HepG2 (cell line): ENCODE measurements at regions of chr1 and their contacts with region 1.

Region 1: GRCh38 chr1:13960375-13960987 is 260.5 kb downstream of the PRDM2 start:
- DNase-seq: peak; percentile 43
- ATAC-seq: peak; percentile 72
- H3K4me3 ChIP-seq: no peak overlapping the region
- H3K27ac ChIP-seq: no peak overlapping the region
- H3K4me1 ChIP-seq: no peaks in the 10 kb centered on the region
- H3K27me3 ChIP-seq: no peaks in the 10 kb centered on the region; a peak in 1 of 5 replicates
- CTCF ChIP-seq: peak; percentile 94
- EP300 ChIP-seq: no peak
- POLR2A ChIP-seq: no peak
- RAD21 ChIP-seq: peak; percentile 64

Region 2: GRCh38 chr1:13662493-13662892 is 298.0 kb before region 1 on chr1:
- CTCF ChIA-PET with region 1: interaction called, 16 read pairs
- POLR2A ChIA-PET with region 1: no interaction called
- in situ Hi-C with region 1: loop called (anchors 10 kb)
- intact Hi-C with region 1: loop called (anchors 1 kb)
- DNase-seq: no peak
- ATAC-seq: no peak
- H3K4me3 ChIP-seq: no peak overlapping the region
- H3K27ac ChIP-seq: no peak overlapping the region
- H3K4me1 ChIP-seq: no peaks in the 10 kb centered on the region
- H3K27me3 ChIP-seq: peaks cover 3 to 17% of the 10 kb centered on the region in 2 experiments; a peak in 3 of 5 replicates
- CTCF ChIP-seq: no peak
- EP300 ChIP-seq: no peak
- POLR2A ChIP-seq: no peak
- RAD21 ChIP-seq: no peak

Region 3: GRCh38 chr1:13667691-13668090 is 292.8 kb before region 1 on chr1:
- CTCF ChIA-PET with region 1: interaction called, 16 read pairs
- POLR2A ChIA-PET with region 1: no interaction called
- in situ Hi-C with region 1: loop called (anchors 10 kb)
- intact Hi-C with region 1: loop called (anchors 1 kb)
- DNase-seq: no peak
- ATAC-seq: no peak
- H3K4me3 ChIP-seq: no peak overlapping the region
- H3K27ac ChIP-seq: no peak overlapping the region
- H3K4me1 ChIP-seq: no peaks in the 10 kb centered on the region
- H3K27me3 ChIP-seq: peaks cover 3 to 12% of the 10 kb centered on the region in 2 experiments; a peak in 2 of 5 replicates
- CTCF ChIP-seq: no peak
- EP300 ChIP-seq: no peak
- POLR2A ChIP-seq: no peak
- RAD21 ChIP-seq: no peak

Region 4: DNA sequence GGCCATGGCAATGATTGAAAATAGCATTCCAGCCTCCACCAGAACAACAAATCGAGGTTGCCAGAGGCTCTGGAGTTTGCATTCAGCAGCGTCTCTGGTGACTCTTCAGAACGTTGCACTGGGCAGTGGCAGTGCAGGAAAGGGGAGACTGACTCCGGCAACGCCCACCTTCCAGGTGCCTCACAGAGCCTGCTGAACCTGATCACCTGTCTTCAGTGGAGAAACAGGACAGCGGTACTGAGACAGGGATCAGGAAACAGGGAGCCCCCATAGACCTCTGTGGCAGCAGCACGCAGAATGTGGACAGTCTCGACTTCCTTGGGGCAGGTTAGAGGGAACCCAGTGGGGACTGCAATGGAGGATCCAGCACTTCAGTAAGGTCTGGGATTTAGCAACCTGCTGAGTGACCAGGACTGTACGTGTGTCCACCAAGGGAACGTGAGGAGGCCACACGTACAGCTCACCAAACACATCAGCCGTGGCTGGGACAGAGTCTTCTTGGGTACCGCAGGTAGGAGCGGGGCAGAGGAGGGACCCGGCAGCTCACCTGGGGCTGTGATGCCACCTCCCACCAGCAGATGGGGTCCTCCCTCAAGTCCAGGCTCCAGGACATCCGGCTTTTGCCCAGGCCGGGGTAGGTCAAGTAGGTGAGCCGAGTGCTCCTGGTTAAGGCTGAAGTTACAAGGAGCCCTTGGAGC is 131.9 kb before region 1 on chr1:
- CTCF ChIA-PET with region 1: interaction called, 6 read pairs
- POLR2A ChIA-PET with region 1: no interaction called
- in situ Hi-C with region 1: loop called (anchors 5 kb)
- intact Hi-C with region 1: loop called (anchors 2 kb)
- DNase-seq: peak; percentile 23
- ATAC-seq: peak; percentile 94
- H3K4me3 ChIP-seq: peak overlapping the region in 1 of 3 experiments; percentile 60; a peak in 1 of 6 replicates
- H3K27ac ChIP-seq: no peak overlapping the region
- H3K4me1 ChIP-seq: peaks cover 8% of the 10 kb centered on the region
- H3K27me3 ChIP-seq: peaks cover 1 to 5% of the 10 kb centered on the region in 2 experiments; a peak in 2 of 5 replicates
- CTCF ChIP-seq: peak; percentile 75
- EP300 ChIP-seq: no peak
- POLR2A ChIP-seq: no peak
- RAD21 ChIP-seq: 0 out of 2 replicates have a peak, but pooled peaks have one; percentile 14

Region 5: DNA sequence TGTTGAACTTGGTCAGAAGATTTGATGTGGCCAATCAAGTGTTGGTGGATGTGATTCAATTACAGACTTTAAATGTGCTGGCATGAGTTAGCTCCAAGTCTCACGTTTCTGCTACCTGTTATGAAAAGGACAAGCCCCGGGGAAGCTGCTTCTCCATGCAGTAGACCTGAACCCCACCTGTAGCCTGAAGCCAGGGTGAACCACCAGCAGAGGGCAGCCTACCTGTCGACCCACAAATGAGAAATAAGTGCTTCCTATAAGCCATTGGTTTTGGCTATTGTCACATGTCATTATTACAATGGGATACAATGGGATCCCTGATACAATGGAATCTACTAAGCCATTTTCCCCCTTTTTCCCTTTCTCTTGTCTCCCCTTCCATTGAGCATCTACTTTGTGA is 30.3 kb before region 1 on chr1:
- CTCF ChIA-PET with region 1: interaction called, 10 read pairs
- POLR2A ChIA-PET with region 1: no interaction called
- in situ Hi-C with region 1: no loop called
- intact Hi-C with region 1: loop called (anchors 1 kb)
- DNase-seq: peak; percentile 9
- ATAC-seq: peak; percentile 54; the same call in 2 of the 3 replicates
- H3K4me3 ChIP-seq: no peak overlapping the region
- H3K27ac ChIP-seq: no peak overlapping the region
- H3K4me1 ChIP-seq: no peaks in the 10 kb centered on the region
- H3K27me3 ChIP-seq: peaks cover 0 to 1% of the 10 kb centered on the region in 2 experiments; a peak in 1 of 5 replicates
- CTCF ChIP-seq: peak; percentile 46
- EP300 ChIP-seq: no peak
- POLR2A ChIP-seq: no peak
- RAD21 ChIP-seq: no peak

Region 6: GRCh38 chr1:14010431-14010830 is 50.0 kb after region 1 on chr1:
- CTCF ChIA-PET with region 1: no interaction called
- POLR2A ChIA-PET with region 1: no interaction called
- in situ Hi-C with region 1: no loop called
- intact Hi-C with region 1: no loop called
- DNase-seq: no peak
- ATAC-seq: no peak
- H3K4me3 ChIP-seq: no peak overlapping the region
- H3K27ac ChIP-seq: no peak overlapping the region
- H3K4me1 ChIP-seq: no peaks in the 10 kb centered on the region
- H3K27me3 ChIP-seq: peaks cover 0 to 6% of the 10 kb centered on the region in 2 experiments; a peak in 2 of 5 replicates
- CTCF ChIP-seq: no peak
- EP300 ChIP-seq: no peak
- POLR2A ChIP-seq: no peak
- RAD21 ChIP-seq: no peak

Region 7: DNA sequence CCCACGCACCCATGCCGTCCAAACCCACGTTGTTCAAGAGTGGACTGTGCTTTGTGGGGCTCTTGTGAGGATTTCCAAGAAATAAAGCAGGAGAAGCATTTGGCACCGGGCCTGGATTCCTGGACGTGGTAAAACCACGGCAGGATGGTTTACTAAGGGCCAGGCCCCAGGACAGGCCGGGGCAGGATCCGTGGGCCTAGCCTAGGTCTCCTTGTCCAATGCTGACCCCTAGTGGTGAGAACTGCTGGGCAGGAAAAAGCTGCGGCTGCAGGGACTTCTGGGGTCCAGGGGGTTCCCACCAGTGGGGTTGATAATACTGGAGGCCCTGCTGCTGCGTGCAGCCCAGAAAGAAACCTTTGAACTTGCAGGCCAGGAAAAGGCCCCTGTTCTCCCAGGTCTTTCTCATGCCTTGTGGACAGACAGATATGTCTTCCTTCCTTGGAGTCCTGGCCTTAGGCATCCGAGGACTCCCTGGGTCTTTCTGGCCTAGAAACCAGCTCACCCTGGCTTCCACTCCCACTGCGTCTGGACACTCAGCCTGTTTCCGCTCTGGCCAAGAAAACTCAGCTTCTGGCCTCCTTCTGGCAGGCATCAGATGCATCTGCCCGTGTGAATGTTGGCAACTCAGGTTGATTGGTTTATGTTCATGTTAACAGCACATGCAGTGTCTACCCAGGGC is 1086.1 kb after region 1 on chr1:
- CTCF ChIA-PET with region 1: no interaction called
- POLR2A ChIA-PET with region 1: no interaction called
- in situ Hi-C with region 1: loop called (anchors 25 kb)
- intact Hi-C with region 1: no loop called
- DNase-seq: peak; percentile 48
- ATAC-seq: peak; percentile 78
- H3K4me3 ChIP-seq: no peak overlapping the region
- H3K27ac ChIP-seq: no peak overlapping the region
- H3K4me1 ChIP-seq: no peaks in the 10 kb centered on the region
- H3K27me3 ChIP-seq: no peaks in the 10 kb centered on the region
- CTCF ChIP-seq: peak; percentile 88
- EP300 ChIP-seq: no peak
- POLR2A ChIP-seq: no peak
- RAD21 ChIP-seq: peak; percentile 79